ENCODE measurements at regions of chr1 and their contacts with region 1.

Region 1: DNA sequence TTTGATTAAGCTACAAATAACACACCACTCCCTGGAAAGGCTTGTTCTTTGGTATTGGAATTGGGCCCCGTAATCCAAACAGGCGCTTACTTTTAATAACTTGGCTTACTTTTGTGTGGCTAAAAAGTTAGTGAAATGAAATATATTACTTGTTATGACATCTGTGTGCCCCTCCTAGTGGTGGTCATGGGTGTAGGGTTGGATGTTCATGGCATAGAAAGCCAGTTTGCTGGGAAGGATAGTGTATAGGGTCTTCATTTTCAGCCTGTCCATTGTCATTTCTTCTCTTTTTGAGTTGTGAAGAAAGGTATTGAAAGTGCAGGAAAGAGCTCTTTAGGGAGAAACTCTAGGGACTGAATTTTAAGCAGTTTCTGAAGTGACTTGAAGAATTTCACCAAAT is 5.9 kb downstream of the CDC14A start:
- DNase-seq: no peak
- H3K4me3 ChIP-seq: no peak overlapping the region
- H3K27ac ChIP-seq: no peak overlapping the region
- H3K4me1 ChIP-seq: peaks cover 2 to 13% (median 8%) of the 10 kb centered on the region in 4 experiments
- H3K27me3 ChIP-seq: no peaks in the 10 kb centered on the region
- CTCF ChIP-seq: peak in 2 of 3 experiments; percentile 20 to 52; a peak in 3 of 4 replicates
- EP300 ChIP-seq: no peak
- POLR2A ChIP-seq: no peak
- RAD21 ChIP-seq: peak in 1 of 2 experiments; percentile 42; a peak in 2 of 4 replicates

Region 2: DNA sequence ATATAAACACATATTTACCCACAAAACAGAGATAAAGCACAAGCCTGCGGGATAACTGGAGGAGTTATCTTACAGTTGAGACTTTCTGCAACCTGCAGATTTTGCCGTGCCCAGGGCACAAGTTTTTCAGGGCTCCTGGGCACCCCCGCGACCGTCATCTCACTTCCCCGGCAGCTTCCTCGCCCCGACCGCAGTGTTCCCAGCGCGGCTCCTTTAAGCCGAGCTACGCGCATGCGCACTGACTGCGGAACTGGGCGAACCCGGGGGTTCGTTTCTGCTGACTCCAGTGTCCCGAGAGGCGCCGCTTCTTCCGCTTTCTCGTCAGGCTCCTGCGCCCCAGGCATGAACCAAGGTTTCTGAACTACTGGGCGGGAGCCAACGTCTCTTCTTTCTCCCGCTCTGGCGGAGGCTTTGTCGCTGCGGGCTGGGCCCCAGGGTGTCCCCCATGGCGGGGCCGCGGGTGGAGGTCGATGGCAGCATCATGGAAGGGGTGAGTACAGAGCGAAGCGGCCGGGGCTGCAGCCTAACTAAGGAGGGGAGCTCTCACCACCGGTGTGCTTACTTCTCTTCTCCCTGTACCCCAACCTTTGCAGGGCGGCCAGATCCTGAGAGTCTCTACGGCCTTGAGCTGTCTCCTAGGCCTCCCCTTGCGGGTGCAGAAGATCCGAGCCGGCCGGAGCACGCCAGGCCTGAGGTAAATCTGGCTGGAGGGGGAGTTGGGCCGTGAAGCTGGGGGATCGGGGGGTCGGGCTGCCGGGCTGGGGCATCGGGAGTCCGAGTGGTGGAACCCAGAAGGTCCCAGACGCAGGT is 92.1 kb before region 1 on chr1 and contains the start of gene RTCA:
- CTCF ChIA-PET with region 1: interaction called, 11 read pairs
- POLR2A ChIA-PET with region 1: interaction called, 17 read pairs
- DNase-seq: peak; percentile 87 to 95
- H3K4me3 ChIP-seq: peak within 1 kb of the TSS; percentile 83 to 93 (median 90)
- H3K27ac ChIP-seq: peak within 1 kb of the TSS; percentile 87
- H3K4me1 ChIP-seq: peaks cover 0 to 3% (median under 1%) of the 10 kb centered on the region in 4 experiments; a peak in 3 of 7 replicates
- H3K27me3 ChIP-seq: no peaks in the 10 kb centered on the region
- CTCF ChIP-seq: no peak
- EP300 ChIP-seq: no peak
- POLR2A ChIP-seq: peak; percentile 51 to 90
- RAD21 ChIP-seq: peak in 1 of 2 experiments; percentile 21; a peak in 2 of 4 replicates
- total RNA-seq, gene RTCA: 31.6 and 31.8 TPM in 2 replicates

Region 3: GRCh38 chr1:100299521-100300222 is 58.5 kb before region 1 on chr1:
- CTCF ChIA-PET with region 1: interaction called, 15 read pairs
- POLR2A ChIA-PET with region 1: interaction called, 31 read pairs
- DNase-seq: no peak
- H3K4me3 ChIP-seq: no peak overlapping the region
- H3K27ac ChIP-seq: no peak overlapping the region
- H3K4me1 ChIP-seq: peaks cover 3 to 12% (median 6%) of the 10 kb centered on the region in 4 experiments; a peak in 6 of 7 replicates
- H3K27me3 ChIP-seq: no peaks in the 10 kb centered on the region
- CTCF ChIP-seq: no peak
- EP300 ChIP-seq: no peak
- POLR2A ChIP-seq: no peak
- RAD21 ChIP-seq: no peak

Region 4: DNA sequence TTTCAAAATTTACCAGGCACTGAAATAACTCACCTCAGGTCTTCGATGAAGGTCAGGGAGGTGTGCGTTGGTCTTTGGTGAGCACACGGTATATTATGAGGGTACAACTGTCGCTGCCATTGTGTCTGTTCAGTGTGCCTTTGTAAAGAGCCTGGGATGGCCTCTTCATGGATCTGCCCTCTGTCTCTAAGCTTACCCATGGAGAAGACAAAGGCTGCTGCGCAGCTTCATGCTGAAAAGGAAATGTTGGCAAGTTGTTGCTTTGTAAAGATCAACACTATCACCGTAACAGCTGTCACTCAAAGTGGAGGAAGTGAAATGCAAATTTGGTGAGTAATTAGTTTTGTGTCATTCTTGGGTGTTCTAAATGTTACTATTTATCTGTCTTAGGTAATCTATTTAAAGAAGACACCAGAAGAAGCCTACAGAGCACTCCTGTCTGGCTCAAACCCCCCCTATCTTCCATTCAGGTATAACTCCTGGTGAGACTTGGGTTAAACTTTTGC is 65.7 kb after region 1 on chr1:
- CTCF ChIA-PET with region 1: interaction called, 11 read pairs
- POLR2A ChIA-PET with region 1: interaction called, 3 read pairs
- DNase-seq: no peak
- H3K4me3 ChIP-seq: no peak overlapping the region
- H3K27ac ChIP-seq: no peak overlapping the region
- H3K4me1 ChIP-seq: peaks cover 0 to 5% (median 3%) of the 10 kb centered on the region in 4 experiments; a peak in 4 of 7 replicates
- H3K27me3 ChIP-seq: no peaks in the 10 kb centered on the region
- CTCF ChIP-seq: no peak
- EP300 ChIP-seq: no peak
- POLR2A ChIP-seq: no peak
- RAD21 ChIP-seq: no peak

Region 5: DNA sequence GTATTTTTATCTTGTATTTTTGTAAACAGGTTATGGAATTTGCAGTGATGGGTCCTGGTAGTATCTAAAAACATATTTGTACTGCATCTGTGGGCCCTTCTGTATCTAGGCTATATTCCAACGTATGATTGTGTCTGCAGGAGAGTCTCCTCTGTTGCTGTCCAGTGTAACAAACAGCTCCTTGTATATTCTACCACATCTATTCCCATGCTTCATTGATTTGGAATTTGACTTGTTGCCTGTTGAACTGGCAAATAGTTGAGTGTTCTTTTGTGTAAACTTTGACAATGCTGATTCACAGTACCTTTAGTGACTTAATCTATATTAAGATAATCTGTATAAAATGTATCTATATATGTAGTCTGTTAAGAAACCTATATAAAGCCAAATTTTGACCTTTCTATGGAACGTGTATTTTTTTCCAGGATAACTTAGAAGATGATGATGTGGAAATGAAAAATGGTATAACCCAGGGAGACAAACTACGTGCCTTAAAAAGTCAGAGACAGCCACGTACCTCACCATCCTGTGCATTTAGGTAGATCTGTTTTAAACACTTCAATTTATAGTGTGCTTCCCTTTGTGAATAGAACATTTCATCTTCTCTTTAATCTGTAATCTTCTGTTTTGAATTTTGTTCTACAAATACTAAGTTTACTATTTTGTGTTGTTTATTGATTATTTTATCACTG is 136.3 kb after region 1 on chr1:
- CTCF ChIA-PET with region 1: no interaction called
- POLR2A ChIA-PET with region 1: no interaction called
- DNase-seq: no peak
- H3K4me3 ChIP-seq: no peak overlapping the region
- H3K27ac ChIP-seq: no peak overlapping the region
- H3K4me1 ChIP-seq: no peaks in the 10 kb centered on the region
- H3K27me3 ChIP-seq: peaks cover 0 to under 1% (median 0%) of the 10 kb centered on the region in 4 experiments; a peak in 1 of 7 replicates
- CTCF ChIP-seq: no peak
- EP300 ChIP-seq: no peak
- POLR2A ChIP-seq: no peak
- RAD21 ChIP-seq: no peak